Mammary epithelial cell (primary cell): ENCODE measurements at regions of chr20 and their contacts with region 1.

Region 1: DNA sequence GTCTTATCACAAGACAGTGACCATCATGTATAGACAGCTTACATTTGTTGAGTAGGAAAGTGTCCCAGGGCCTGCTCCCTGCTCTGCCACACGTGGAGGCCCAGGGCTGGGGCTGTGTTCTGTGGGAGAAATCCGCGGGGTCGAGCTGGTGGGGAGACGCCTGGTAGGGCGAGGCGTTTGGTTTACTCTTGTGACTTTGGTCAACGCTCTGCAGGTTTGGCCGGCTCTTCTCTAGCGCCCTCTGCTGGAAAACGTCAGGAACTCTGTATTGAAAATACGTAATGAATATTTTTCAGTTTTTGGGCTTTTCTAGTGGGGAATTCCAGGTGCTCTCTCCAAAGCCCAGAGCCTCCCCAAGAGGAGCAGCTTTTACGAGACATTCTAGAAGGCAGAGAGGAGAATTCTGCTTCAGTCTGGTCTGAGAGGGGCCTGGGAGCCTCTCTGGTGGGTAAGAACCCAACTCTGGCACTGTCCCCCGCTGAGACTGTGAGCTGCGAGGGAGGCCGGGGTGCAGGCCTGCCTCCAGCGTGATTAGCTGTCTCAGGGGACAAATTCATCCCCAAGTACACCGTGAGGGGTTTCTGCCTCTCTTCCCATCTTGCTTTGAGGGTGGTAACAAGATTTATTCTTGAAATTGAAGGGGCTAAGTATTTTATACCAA is 112.6 kb upstream of the RALGAPA2 start:
- DNase-seq: no peak
- H3K4me3 ChIP-seq: no peak overlapping the region
- H3K27ac ChIP-seq: no peak overlapping the region
- H3K4me1 ChIP-seq: no peaks in the 10 kb centered on the region
- H3K27me3 ChIP-seq: no peaks in the 10 kb centered on the region
- CTCF ChIP-seq: peak; percentile 72 to 79

Region 2: DNA sequence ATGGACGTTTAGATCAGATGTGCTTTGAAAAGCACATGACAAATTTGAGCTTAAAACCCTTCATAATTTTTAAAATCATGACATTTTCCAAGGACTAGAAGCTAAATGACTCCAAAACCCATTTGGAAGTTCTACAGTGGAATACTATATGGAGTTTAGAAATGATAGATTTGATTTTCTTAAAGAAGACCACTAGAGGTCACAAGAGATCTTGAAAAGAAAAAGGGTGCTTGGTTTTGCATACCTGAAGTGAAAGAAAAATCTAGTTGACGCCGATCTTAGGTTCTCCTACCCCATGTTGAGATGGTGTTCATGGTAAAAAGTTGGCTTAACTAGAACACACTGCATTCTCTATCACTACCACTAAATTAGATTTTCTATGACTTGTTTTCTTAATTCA is 741.2 kb before region 1 on chr20:
- CTCF ChIA-PET with region 1: no interaction called
- dilution Hi-C with region 1: no loop called
- in situ Hi-C with region 1: no loop called
- intact Hi-C with region 1: loop called (anchors 5 kb)
- DNase-seq: peak; percentile 23
- H3K4me3 ChIP-seq: peak overlapping the region in 1 of 3 experiments; percentile 17
- H3K27ac ChIP-seq: no peak overlapping the region
- H3K4me1 ChIP-seq: peaks cover 15% of the 10 kb centered on the region
- H3K27me3 ChIP-seq: peaks cover 1% of the 10 kb centered on the region
- CTCF ChIP-seq: peak; percentile 40 to 44

Region 3: DNA sequence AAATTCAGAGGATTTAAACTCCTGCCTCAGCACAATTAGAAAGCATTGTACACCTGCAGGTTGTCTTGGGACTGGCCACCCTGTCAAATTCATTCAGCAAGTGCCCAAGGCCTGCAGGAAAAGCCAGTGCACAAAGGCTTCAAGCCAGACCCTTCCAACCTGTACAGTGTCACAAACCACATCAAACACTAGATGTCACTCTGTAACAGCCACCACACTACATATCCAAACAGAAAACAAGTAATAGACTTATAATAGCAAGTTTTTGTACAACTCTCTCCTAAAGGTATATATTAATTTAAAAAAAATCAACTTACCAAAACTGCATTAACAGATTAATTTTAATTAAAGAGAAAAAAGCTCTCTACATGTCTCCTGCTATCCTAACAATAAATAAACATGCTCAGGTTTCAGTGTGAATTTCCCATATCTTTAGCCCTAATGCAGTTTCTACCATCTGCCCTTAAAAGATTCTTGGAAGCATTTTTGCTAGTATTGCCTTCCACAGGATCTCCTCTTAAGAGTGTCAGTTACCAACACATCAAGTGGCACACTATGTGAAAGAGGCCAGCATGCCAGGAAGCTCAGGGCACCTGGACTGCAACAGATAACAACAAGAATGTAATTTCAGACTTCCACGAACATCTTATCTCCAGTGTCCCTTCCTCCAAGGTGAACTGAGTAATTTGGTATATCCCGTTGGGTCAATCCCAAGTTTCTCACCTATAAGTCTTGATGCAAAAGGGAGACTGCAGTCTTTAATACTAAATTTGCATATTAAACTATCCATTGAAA is 160.1 kb before region 1 on chr20:
- CTCF ChIA-PET with region 1: no interaction called
- dilution Hi-C with region 1: no loop called
- in situ Hi-C with region 1: loop called (anchors 5 to 10 kb)
- intact Hi-C with region 1: loop called (anchors 1 kb)
- DNase-seq: no peak
- H3K4me3 ChIP-seq: no peak overlapping the region
- H3K27ac ChIP-seq: no peak overlapping the region
- H3K4me1 ChIP-seq: no peaks in the 10 kb centered on the region
- H3K27me3 ChIP-seq: no peaks in the 10 kb centered on the region
- CTCF ChIP-seq: peak; percentile 34 to 63

Region 4: DNA sequence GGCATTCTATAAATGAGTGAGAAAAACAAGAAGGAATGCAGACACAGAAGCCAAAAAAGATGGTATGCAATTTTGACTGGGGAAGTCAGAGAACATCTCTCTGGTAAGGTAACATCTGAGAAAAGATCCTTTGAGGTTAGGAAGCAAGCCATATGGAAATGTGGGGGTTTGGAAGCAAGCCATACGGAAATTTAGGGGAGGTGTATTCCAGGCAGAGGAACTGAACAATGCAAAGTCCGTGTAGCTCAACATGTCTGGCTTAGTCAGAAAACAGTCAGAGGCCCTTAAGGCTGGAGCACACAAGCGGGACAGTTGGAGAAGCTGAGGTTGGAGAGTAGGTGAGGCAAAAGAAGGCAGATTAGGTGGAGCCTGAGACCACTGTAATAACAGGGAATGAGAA is 147.9 kb before region 1 on chr20:
- CTCF ChIA-PET with region 1: no interaction called
- dilution Hi-C with region 1: no loop called
- in situ Hi-C with region 1: loop called (anchors 5 to 10 kb)
- intact Hi-C with region 1: no loop called
- DNase-seq: peak; percentile 63
- H3K4me3 ChIP-seq: no peak overlapping the region
- H3K27ac ChIP-seq: no peak overlapping the region
- H3K4me1 ChIP-seq: peaks cover 7% of the 10 kb centered on the region
- H3K27me3 ChIP-seq: no peaks in the 10 kb centered on the region
- CTCF ChIP-seq: no peak

Region 5: DNA sequence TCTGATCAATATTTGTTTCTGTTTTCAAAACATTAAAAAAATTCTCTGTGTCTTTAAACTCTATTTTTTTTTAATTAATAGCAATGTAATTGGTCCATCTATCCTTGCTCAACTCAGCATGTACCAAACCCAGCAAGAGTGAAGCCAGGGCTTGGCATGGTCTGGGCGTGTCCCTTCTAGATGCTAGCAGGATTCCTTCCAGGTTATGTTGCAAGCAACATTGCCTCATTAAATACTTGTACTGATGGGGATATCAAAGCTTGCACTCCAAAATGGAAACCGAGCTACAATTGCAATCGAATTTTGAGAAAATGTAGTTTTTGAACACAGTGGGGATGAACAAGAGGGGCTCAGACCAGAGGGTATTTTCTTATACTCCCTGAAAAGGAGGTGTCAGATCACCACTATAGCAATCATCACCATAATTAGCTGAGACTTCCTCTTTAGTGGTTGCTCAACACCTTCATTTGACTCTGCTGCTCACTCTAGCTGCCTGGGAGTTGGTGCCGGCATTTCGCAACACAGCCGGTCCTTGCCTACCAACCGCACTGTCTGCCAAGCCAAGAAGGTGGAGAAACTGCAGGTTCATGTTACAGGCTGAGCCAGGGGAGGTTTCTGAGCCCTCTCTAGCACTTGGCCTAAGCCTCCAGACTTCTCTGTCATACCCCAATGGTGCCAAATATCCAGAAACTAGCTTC is 44.8 kb before region 1 on chr20:
- CTCF ChIA-PET with region 1: no interaction called
- dilution Hi-C with region 1: loop called (anchors 5 kb)
- in situ Hi-C with region 1: no loop called
- intact Hi-C with region 1: no loop called
- DNase-seq: peak; percentile 70
- H3K4me3 ChIP-seq: peak overlapping the region; percentile 24 to 45 (median 42)
- H3K27ac ChIP-seq: no peak overlapping the region
- H3K4me1 ChIP-seq: peaks cover 9% of the 10 kb centered on the region
- H3K27me3 ChIP-seq: no peaks in the 10 kb centered on the region
- CTCF ChIP-seq: no peak